PC-3 (cell line): ENCODE measurements at regions of chr18 and their contacts with region 1.

Region 1: DNA sequence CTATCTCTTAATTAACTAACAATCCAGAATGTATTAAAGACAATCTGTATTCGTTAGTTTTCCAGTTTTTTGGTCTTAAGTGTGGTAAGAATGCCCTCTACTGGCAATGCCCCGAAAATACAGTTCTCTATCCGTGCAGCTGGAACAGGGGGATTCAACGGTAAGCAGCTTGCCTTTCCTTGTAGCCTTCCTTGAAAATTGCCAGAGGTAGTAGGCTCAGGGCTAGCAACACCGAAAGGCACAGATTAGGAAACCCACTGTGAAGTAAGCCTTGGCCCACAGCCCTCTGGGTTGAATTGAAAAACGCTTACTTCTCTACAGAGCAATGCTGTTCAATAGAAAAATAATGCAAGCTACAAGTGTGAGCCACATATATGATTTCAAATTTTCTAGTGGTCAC is 17.1 kb upstream of the VPS4B start:
- DNase-seq: peak; percentile 79
- ATAC-seq: peak; percentile 34
- H3K4me3 ChIP-seq: no peak overlapping the region
- H3K27ac ChIP-seq: no peak overlapping the region
- H3K4me1 ChIP-seq: peaks cover 20% of the 10 kb centered on the region
- H3K27me3 ChIP-seq: no peaks in the 10 kb centered on the region
- CTCF ChIP-seq: peak; percentile 92

Region 2: DNA sequence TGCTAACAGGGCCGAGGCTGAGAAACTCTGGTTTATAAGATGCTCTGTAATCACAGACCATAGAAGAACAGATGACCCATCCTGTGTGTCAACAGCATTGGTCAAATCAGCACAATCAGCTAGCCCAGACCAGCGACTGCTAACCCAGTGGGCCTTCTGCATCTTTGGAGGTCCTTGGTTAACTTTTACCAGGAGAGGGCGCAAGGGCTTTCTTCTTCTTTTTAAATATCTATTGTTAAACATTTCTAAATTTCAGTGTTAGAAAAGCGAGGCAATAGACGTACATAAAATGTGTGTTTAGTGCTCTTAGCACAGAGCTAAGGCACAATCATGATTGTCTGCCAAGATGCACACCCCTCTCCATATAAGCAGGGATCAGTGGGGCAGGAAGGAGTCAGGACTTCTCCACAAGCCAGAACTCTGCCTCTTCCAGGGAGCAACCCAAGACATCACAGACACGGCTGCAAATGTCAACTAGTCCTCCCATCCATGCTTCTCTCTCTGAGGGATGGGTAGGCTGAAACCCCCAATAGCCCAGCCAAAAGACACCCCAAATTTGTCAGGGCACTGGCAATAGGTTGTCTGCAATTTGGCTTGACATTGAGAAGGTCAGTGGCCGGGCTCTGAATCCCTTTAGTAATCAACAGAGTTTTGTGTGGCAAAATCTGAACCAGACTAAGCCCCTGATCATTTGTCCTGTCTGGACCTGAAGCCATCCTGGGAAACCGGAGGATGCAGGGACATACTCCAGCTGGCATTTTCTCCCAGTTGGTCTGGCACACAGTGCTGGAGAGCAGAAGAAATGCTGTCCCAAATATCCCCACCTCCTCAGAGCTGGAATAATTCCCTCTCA is 308.0 kb before region 1 on chr18:
- CTCF ChIA-PET with region 1: interaction called, 3 read pairs
- POLR2A ChIA-PET with region 1: no interaction called
- intact Hi-C with region 1: loop called (anchors 1 kb)
- DNase-seq: peak; percentile 69
- ATAC-seq: peak; percentile 62
- H3K4me3 ChIP-seq: no peak overlapping the region
- H3K27ac ChIP-seq: no peak overlapping the region
- H3K4me1 ChIP-seq: no peaks in the 10 kb centered on the region
- H3K27me3 ChIP-seq: peaks cover 8% of the 10 kb centered on the region; the same call in 1 of the 2 replicates
- CTCF ChIP-seq: peak; percentile 77

Region 3: DNA sequence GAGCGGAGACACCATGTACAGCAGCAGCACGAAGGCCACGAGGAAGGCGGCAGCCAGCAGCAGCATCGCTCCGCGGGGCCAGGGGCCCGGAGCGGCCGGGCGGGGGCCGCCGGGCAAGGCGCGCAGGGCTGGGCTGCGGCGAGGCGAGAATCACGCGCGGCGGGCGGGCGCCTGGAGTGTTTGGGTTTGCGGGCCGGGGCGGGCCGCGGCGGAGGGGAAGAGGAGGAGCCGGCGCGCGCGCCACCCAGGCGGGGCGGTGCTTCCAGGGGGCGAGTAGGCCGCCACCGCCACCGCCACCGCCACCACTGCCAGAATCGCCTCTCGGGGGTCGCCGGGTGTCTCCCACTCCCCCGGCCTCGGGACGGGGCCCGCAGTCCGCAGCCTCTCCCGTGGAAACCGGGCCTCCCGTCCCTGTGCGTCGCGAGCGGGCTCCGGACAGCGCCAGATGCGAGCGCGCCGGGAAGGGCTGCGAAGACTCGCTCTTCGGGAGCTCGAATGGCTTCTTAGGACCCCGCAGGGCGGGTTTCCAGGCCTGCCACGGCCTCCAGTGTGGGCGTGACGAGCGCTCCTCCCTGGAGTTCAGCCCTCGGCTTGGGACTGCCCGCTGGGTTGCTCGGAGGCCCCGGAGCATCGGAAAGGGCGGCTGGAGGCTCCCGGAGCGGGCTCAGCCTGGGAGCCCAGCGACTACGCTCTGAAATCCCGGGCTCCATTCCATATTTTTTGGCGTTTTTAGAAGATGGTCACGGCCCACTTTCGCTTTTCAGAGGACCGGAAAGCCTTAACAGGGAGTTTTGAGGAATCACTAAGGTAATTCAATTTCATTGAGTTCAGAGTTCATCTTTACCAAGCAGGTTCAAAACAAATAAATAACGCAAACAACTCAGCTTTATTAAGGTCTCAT is 72.0 kb before region 1 on chr18 and contains the start of gene KDSR:
- CTCF ChIA-PET with region 1: interaction called, 5 read pairs
- POLR2A ChIA-PET with region 1: no interaction called
- intact Hi-C with region 1: loop called (anchors 1 kb)
- DNase-seq: peak; percentile 97
- ATAC-seq: peak; percentile 88
- H3K4me3 ChIP-seq: peak within 1 kb of the TSS; percentile 85
- H3K27ac ChIP-seq: peak within 1 kb of the TSS; percentile 68
- H3K4me1 ChIP-seq: peaks cover 6% of the 10 kb centered on the region
- H3K27me3 ChIP-seq: no peaks in the 10 kb centered on the region
- CTCF ChIP-seq: no peak
- total RNA-seq, gene KDSR: 15.8 and 16.1 TPM in 2 replicates

Region 4: GRCh38 chr18:63476666-63477065 is 37.3 kb after region 1 on chr18 and contains the start of gene SERPINB5:
- CTCF ChIA-PET with region 1: interaction called, 9 read pairs
- POLR2A ChIA-PET with region 1: interaction called, 9 read pairs
- intact Hi-C with region 1: loop called (anchors 1 kb)
- DNase-seq: peak; percentile 96
- ATAC-seq: peak; percentile 74
- H3K4me3 ChIP-seq: peak within 1 kb of the TSS; percentile 95
- H3K27ac ChIP-seq: peak within 1 kb of the TSS; percentile 88
- H3K4me1 ChIP-seq: peaks cover 68% of the 10 kb centered on the region
- H3K27me3 ChIP-seq: no peaks in the 10 kb centered on the region
- CTCF ChIP-seq: no peak
- total RNA-seq, gene SERPINB5: 96.5 and 104 TPM in 2 replicates